A549 (cell line): ENCODE measurements at regions of chr20 and their contacts with region 1.

Region 1: GRCh38 chr20:49132995-49133478 is 55.1 kb downstream of the STAU1 start:
- DNase-seq: peak; percentile 57 to 73
- ATAC-seq: peak; percentile 75 to 89
- H3K4me3 ChIP-seq: no peak overlapping the region
- H3K27ac ChIP-seq: no peak overlapping the region
- H3K4me1 ChIP-seq: no peaks in the 10 kb centered on the region
- CTCF ChIP-seq: peak; percentile 81
- EP300 ChIP-seq: no peak
- POLR2A ChIP-seq: no peak
- RAD21 ChIP-seq: peak; percentile 73 to 74

Region 2: DNA sequence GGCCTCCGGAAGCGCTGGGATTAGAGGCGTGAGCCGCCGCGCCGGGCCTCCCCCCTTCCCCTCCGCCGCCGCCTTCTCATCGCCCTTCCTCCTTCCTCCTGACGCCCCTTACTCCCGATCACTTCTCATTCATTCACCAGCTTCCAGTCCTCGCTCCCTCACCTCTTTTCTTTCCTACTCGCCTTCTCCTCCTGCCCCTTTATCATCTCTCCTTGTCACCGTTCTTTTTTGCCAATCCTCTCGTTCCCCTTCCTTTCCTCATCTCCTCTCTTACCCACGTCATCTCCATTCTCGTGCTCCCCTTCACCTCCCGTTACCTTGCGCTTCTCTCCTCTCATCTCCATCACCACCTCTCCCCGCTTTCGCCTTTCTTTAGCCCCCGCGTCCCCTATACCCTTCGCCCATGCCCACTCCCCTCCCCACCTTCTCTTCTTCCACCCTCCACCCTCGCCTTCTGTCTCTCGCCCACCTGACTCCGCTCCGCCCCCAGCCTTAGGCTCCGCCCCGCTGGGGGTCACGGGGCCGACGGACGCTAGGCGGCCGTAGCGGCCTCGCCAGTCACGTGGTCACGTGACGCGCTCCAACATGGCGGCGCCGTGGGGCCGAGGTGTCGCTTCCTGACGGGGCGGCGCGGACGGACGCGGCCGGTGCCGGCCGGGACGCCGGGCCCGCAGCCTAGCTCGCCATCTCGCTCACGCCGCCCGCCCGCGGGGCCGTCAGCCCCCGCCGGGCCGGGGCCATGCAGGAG is 211.7 kb before region 1 on chr20 and contains the start of gene ARFGEF2:
- CTCF ChIA-PET with region 1: no interaction called
- POLR2A ChIA-PET with region 1: no interaction called
- DNase-seq: peak; percentile 91 to 92
- ATAC-seq: peak; percentile 90 to 94
- H3K4me3 ChIP-seq: peak within 1 kb of the TSS; percentile 89
- H3K27ac ChIP-seq: peak within 1 kb of the TSS; percentile 96 to 98
- H3K4me1 ChIP-seq: peaks cover 22% of the 10 kb centered on the region
- CTCF ChIP-seq: no peak
- EP300 ChIP-seq: no peak
- POLR2A ChIP-seq: peak; percentile 88
- RAD21 ChIP-seq: no peak
- polyA plus RNA-seq, gene ARFGEF2: 24.3 and 27.8 TPM in 2 replicates

Region 3: GRCh38 chr20:48933017-48933766 is 199.8 kb before region 1 on chr20:
- CTCF ChIA-PET with region 1: no interaction called
- POLR2A ChIA-PET with region 1: no interaction called
- DNase-seq: no peak
- ATAC-seq: peak; percentile 39 to 45; a peak in 4 of 6 replicates
- H3K4me3 ChIP-seq: no peak overlapping the region
- H3K27ac ChIP-seq: no peak overlapping the region
- H3K4me1 ChIP-seq: no peaks in the 10 kb centered on the region
- CTCF ChIP-seq: no peak
- EP300 ChIP-seq: no peak
- POLR2A ChIP-seq: no peak
- RAD21 ChIP-seq: no peak

Region 4: GRCh38 chr20:49046087-49046900 is 86.7 kb before region 1 on chr20 and contains the start of gene CSE1L:
- CTCF ChIA-PET with region 1: no interaction called
- POLR2A ChIA-PET with region 1: no interaction called
- DNase-seq: peak; percentile 92 to 96
- ATAC-seq: peak; percentile 96 to 97
- H3K4me3 ChIP-seq: peak within 1 kb of the TSS; percentile 73
- H3K27ac ChIP-seq: peak within 1 kb of the TSS; percentile 86 to 98
- H3K4me1 ChIP-seq: peaks cover 17% of the 10 kb centered on the region
- CTCF ChIP-seq: no peak
- EP300 ChIP-seq: no peak
- POLR2A ChIP-seq: peak; percentile 92
- RAD21 ChIP-seq: no peak
- polyA plus RNA-seq, gene CSE1L: 125 and 131 TPM in 2 replicates

Region 5: GRCh38 chr20:49148601-49149000 is 15.6 kb after region 1 on chr20:
- CTCF ChIA-PET with region 1: interaction called, 17 read pairs
- POLR2A ChIA-PET with region 1: no interaction called
- DNase-seq: no peak
- ATAC-seq: no peak
- H3K4me3 ChIP-seq: no peak overlapping the region
- H3K27ac ChIP-seq: no peak overlapping the region
- H3K4me1 ChIP-seq: no peaks in the 10 kb centered on the region
- CTCF ChIP-seq: no peak
- EP300 ChIP-seq: no peak
- POLR2A ChIP-seq: no peak
- RAD21 ChIP-seq: no peak

Region 6: DNA sequence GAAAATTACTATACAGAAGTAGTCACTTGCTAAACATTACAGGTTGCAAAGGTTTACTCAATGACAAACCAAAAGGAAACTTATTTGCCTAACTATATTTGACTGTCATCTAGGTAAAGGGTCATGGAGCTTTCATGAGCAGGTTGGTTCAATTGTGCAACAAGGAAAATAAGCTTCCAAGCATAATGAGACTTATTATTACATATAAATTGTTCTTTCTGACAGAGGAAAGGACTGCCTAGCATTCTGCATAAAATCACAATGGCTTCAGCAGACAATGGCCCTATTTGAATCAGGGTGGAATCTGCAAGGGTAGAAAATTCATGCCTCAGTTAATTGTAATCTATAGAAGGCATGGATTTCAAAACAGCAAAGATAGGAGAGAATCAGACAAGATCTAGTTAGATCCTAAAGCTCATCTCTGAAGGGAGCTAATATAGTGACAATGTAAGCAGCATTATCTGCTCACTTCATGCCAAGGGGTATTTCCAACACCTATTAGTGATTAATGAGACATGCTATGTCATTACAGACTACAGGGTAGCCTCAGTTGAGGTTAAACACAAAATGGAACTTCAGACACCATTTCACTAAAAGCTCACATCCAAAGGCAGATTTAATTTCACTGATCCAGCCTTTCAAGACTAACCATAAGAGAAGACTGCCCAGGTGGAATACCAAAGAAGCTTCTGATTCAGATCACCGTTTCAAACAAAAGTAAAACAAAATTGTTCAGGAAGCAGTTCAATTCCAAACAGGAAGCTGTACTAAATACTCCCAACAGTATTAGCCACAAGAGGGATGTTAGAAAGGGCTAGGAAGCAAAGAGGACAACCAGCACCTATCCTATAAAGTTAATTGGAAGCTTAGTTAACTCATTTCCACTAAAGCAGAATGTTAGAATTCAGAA is 46.6 kb after region 1 on chr20:
- CTCF ChIA-PET with region 1: interaction called, 28 read pairs
- POLR2A ChIA-PET with region 1: no interaction called
- DNase-seq: no peak
- ATAC-seq: no peak; a peak in 1 of 6 replicates
- H3K4me3 ChIP-seq: no peak overlapping the region
- H3K27ac ChIP-seq: no peak overlapping the region
- H3K4me1 ChIP-seq: peaks cover 48% of the 10 kb centered on the region
- CTCF ChIP-seq: no peak
- EP300 ChIP-seq: no peak
- POLR2A ChIP-seq: no peak
- RAD21 ChIP-seq: no peak

Region 7: DNA sequence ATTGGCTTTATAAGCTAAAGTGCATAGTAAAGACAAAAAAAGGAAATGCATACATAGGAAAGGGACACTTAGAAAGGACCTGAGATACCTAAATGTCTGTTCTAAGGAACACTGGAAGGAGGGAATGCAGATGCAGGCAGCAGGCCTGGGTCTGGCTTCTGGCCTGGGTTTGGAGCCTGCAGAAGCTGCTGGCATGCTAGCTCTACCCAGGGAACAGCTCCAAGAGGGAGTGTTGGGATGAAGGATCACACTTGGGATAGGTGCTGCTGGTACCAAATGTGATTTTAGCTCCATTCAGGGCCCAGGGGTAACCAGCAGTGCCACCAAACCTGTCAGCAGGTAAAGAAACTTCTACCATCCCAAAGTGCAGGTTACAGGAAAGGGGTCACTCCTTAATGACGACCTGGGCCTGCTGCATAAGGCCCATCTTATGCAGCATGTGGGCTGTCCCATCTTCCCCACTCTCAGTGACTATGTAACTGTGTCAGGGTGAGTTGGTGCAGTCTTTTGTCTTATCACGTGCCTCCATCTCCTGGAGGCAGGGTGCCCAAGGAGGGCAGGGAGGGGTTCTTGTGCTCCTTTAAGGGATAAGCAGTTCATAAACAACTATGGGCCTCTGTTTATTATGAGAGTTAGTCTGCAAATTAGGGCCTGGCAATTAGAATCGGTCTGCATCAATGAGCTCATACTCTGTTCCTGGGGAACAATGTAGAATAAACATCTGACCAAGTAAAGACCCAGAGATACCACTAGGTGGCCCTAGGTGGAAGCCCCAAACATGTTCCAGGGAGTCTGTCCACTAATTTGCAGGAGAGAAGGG is 113.1 kb after region 1 on chr20:
- CTCF ChIA-PET with region 1: interaction called, 12 read pairs
- POLR2A ChIA-PET with region 1: no interaction called
- DNase-seq: peak; percentile 53 to 73
- ATAC-seq: peak; percentile 80 to 88
- H3K4me3 ChIP-seq: no peak overlapping the region
- H3K27ac ChIP-seq: no peak overlapping the region
- H3K4me1 ChIP-seq: no peaks in the 10 kb centered on the region
- CTCF ChIP-seq: peak; percentile 59
- EP300 ChIP-seq: no peak
- POLR2A ChIP-seq: no peak
- RAD21 ChIP-seq: peak; percentile 27 to 47; a peak in 3 of 5 replicates

Region 8: GRCh38 chr20:49385471-49385870 is 252.4 kb after region 1 on chr20:
- CTCF ChIA-PET with region 1: no interaction called
- POLR2A ChIA-PET with region 1: no interaction called
- DNase-seq: peak in 1 of 2 experiments; percentile 53
- ATAC-seq: peak; percentile 83 to 92
- H3K4me3 ChIP-seq: no peak overlapping the region
- H3K27ac ChIP-seq: no peak overlapping the region
- H3K4me1 ChIP-seq: peaks cover 19% of the 10 kb centered on the region
- CTCF ChIP-seq: no peak
- EP300 ChIP-seq: no peak
- POLR2A ChIP-seq: no peak
- RAD21 ChIP-seq: no peak